Motor neuron (in vitro differentiated cells): ENCODE measurements at regions of chr3 and their contacts with region 1.

Region 1: GRCh38 chr3:122258757-122259371 is 66.2 kb upstream of the CSTA start:
- ATAC-seq: peak; percentile 67 to 98 (median 90)
- H3K4me3 ChIP-seq: no peak overlapping the region
- H3K27ac ChIP-seq: no peak overlapping the region
- H3K4me1 ChIP-seq: no peaks in the 10 kb centered on the region

Region 2: DNA sequence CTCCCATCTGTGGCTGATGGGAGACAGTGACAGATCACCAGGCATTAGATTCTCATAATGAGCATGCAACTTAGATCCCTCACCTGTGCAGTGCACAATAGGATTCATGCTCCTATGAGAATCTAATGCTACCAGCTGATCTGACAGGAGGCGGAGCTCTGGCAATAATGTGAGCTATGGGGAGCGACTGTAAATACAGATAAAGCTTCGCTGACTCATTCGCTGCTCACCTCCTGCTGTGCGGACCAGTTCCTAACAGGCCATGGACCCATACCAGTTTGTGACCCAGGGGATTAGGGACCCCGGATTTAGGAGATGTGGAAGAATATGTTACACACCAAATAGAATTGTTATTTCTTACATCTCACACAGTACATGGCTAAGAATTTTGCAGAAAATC is 684.4 kb before region 1 on chr3:
- in situ Hi-C with region 1: loop called in 1 of 9 experiments (anchors 25 kb)
- ATAC-seq: peak in 5 of 8 experiments; percentile 47 to 87 (median 78)
- H3K4me3 ChIP-seq: no peak overlapping the region
- H3K27ac ChIP-seq: no peak overlapping the region
- H3K4me1 ChIP-seq: no peaks in the 10 kb centered on the region